ENCODE measurements at regions of chr2 and their contacts with region 1.

Region 1: GRCh38 chr2:8202132-8202531 is 479.7 kb upstream of the ID2 start:
- DNase-seq: no peak
- ATAC-seq: peak; percentile 55
- H3K4me3 Mint-ChIP-seq: no peak overlapping the region
- H3K27ac Mint-ChIP-seq: peak overlapping the region; percentile 61
- H3K4me1 Mint-ChIP-seq: peaks cover 13% of the 10 kb centered on the region
- H3K27me3 Mint-ChIP-seq: peaks cover 2% of the 10 kb centered on the region

Region 2: DNA sequence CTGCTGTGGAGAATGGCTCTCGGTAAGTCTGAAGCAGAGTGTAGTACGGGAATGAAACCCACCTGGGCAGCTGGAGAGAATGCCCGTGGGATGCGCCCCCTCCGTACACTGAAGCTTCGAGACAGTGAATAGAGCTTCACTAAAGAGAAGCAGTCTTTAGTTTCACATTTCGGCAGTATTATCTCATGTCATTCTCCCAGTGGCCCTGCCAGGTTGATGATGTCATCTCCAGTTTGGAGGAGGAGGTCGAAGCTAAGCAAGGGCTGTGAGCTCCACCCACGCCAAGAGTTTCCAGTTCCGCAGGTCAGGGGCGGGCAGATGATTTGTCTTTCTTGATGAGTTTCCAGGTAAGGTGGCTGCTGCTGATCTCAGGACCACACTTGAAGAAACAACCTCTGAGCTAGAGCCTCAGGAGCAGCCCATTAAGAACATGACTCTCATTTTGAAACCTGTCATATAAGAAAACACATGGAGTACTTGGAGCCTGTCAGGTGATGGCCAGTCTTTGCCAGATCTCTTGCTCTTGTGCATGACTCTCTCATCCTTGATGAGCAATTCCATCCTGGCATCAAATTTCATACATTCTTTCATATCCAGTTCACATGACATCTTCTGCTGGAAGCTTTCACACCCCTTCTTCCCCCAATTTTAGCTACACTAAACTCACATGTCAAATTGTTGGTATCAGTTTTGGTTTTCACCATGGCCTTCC is 809.9 kb before region 1 on chr2:
- CTCF ChIA-PET with region 1: no interaction called
- POLR2A ChIA-PET with region 1: no interaction called
- intact Hi-C with region 1: no loop called
- DNase-seq: peak; percentile 22
- ATAC-seq: peak; percentile 61
- H3K4me3 Mint-ChIP-seq: no peak overlapping the region
- H3K27ac Mint-ChIP-seq: no peak overlapping the region
- H3K4me1 Mint-ChIP-seq: peaks cover 6% of the 10 kb centered on the region
- H3K27me3 Mint-ChIP-seq: peaks cover 3% of the 10 kb centered on the region

Region 3: GRCh38 chr2:8303322-8303832 is 101.2 kb after region 1 on chr2:
- CTCF ChIA-PET with region 1: no interaction called
- POLR2A ChIA-PET with region 1: no interaction called
- intact Hi-C with region 1: loop called in 1 of 2 experiments (anchors 1 kb)
- DNase-seq: peak; percentile 53
- ATAC-seq: peak; percentile 7
- H3K4me3 Mint-ChIP-seq: no peak overlapping the region
- H3K27ac Mint-ChIP-seq: peak overlapping the region; percentile 63
- H3K4me1 Mint-ChIP-seq: peaks cover 51% of the 10 kb centered on the region
- H3K27me3 Mint-ChIP-seq: peaks cover 5% of the 10 kb centered on the region

Region 4: DNA sequence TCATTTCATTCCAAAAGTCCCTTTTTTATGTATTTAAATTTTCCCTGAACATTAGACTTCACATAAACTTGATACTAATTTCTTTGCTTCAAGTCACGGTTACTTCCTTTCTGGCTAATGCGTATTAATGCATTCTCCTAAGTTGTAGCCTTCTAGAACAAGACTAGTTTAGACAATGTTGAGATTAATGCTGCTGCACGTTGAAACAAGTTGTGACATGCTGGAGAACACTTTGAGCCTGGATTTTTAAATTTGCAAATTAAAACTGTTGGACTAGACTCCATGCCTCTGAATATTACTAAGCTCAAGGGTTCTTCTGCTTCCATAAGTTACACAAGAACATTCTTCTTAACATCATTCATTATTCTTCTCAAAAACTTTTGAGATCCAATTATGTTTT is 508.8 kb after region 1 on chr2:
- CTCF ChIA-PET with region 1: no interaction called
- POLR2A ChIA-PET with region 1: no interaction called
- intact Hi-C with region 1: no loop called
- DNase-seq: no peak
- ATAC-seq: no peak
- H3K4me3 Mint-ChIP-seq: no peak overlapping the region
- H3K27ac Mint-ChIP-seq: no peak overlapping the region
- H3K4me1 Mint-ChIP-seq: no peaks in the 10 kb centered on the region
- H3K27me3 Mint-ChIP-seq: peaks cover 6% of the 10 kb centered on the region

Measured in activated CD4-positive, alpha-beta T cell treated with anti-CD3 and anti-CD28 coated beads for 36 hours (primary cell).